Calu3 (cell line): ENCODE measurements at regions of chr4 and their contacts with region 1.

Region 1: GRCh38 chr4:24988776-24989175 is 42.0 kb downstream of the LGI2 start:
- DNase-seq: peak; percentile 42
- H3K4me3 Mint-ChIP-seq: no peak overlapping the region
- H3K27ac Mint-ChIP-seq: no peak overlapping the region
- H3K4me1 Mint-ChIP-seq: no peaks in the 10 kb centered on the region
- H3K27me3 Mint-ChIP-seq: no peaks in the 10 kb centered on the region
- CTCF ChIP-seq: no peak

Region 2: GRCh38 chr4:24472514-24473308 is 516.1 kb before region 1 on chr4:
- CTCF ChIA-PET with region 1: interaction called, 3 read pairs
- intact Hi-C with region 1: loop called (anchors 5 kb)
- DNase-seq: peak; percentile 76
- H3K4me3 Mint-ChIP-seq: peak overlapping the region; percentile 92
- H3K27ac Mint-ChIP-seq: no peak overlapping the region
- H3K4me1 Mint-ChIP-seq: peaks cover 20% of the 10 kb centered on the region
- H3K27me3 Mint-ChIP-seq: peaks cover 40% of the 10 kb centered on the region
- CTCF ChIP-seq: peak; percentile 76

Region 3: DNA sequence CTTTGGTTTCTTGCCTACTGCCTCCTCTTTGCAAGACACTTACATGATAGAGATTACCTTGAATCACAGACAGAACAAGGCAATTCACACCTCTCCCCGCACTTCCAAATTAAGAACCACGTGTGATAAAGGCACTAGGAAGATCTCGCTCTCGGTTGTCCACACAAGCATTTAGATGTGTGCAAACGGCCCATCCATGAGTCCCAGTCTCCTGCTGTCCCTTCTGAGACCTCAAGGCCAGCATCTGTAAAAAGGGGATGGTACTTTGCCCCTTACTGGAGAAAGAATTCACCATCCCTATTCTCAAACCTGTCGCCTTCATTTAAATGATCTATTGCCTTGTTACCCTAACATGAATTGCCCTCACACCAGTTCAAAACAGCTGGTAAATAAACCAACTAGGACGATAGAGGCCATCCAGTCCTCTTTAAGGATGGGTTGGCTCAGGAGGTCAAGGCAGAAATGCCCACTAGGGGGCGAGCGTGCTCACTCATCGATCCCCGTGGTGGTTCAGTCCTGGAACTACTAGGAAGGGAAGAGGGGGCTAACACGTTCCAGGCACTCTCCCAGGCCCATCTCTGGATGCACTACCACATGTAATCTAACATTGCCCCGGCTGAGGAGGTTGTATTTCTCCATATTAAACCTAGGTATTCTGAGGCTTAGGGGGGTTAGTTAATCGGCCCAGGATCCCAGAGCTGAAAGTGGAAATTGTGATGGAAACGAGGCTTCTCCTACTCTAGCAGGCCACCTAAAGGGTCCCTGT is 500.2 kb before region 1 on chr4:
- CTCF ChIA-PET with region 1: no interaction called
- intact Hi-C with region 1: loop called (anchors 5 kb)
- DNase-seq: peak; percentile 81
- H3K4me3 Mint-ChIP-seq: no peak overlapping the region
- H3K27ac Mint-ChIP-seq: no peak overlapping the region
- H3K4me1 Mint-ChIP-seq: no peaks in the 10 kb centered on the region
- H3K27me3 Mint-ChIP-seq: peaks cover 17% of the 10 kb centered on the region
- CTCF ChIP-seq: peak; percentile 65

Region 4: DNA sequence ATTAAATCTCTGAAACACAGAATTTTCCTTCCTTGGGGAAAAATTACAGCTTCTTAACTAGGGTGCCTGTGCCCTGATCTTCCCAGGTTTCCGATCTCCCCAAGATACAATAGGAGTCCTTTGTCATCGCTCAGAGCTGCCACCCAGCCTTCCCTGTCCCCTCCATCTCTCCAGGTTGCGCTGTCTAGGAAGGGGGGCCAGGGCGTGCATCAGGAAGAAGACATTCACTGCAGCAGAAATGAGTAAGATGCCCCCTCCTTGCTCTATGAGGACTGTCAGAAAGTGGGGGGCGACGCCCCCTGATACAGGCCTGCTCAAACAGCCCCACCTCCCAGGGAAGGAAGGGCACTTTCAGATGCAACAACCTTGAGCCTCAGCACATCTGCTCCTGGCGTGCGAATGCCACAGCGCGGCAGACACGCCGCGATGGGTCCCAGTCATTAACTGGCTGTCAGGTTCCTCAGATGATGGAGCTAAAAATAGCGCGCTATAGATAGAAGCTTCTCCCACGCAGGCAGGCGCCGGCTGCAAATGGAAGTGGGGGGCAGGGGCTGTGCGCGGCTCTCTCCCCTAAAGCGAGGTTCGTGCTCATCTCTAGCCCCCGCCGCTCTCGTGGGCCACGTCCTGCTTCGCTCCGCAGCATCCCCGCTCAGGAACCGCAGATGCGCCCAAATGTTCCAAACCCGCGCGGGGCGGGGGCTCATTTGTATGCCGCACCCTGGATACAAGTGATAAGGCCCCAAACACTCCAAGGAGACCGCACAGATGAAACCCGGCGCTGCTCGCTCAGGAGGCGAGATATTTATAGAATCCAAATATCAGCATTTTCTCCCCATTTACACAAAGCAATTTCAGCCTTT is 99.5 kb after region 1 on chr4:
- CTCF ChIA-PET with region 1: no interaction called
- intact Hi-C with region 1: no loop called
- DNase-seq: no peak
- H3K4me3 Mint-ChIP-seq: no peak overlapping the region
- H3K27ac Mint-ChIP-seq: no peak overlapping the region
- H3K4me1 Mint-ChIP-seq: peaks cover 7% of the 10 kb centered on the region
- H3K27me3 Mint-ChIP-seq: peaks cover 13% of the 10 kb centered on the region
- CTCF ChIP-seq: no peak